ENCODE measurements at regions of chr4 and their contacts with region 1.

Region 1: GRCh38 chr4:41887821-41888686 is 47.2 kb upstream of the TMEM33 start:
- DNase-seq: peak in 3 of 4 experiments; percentile 39 to 60 (median 46)
- ATAC-seq: no peak
- H3K4me3 ChIP-seq: no peak overlapping the region
- H3K27ac ChIP-seq: no peak overlapping the region
- H3K4me1 ChIP-seq: no peaks in the 10 kb centered on the region
- H3K27me3 ChIP-seq: peaks cover 0 to 3% of the 10 kb centered on the region in 2 experiments; a peak in 3 of 5 replicates
- CTCF ChIP-seq: peak; percentile 59 to 80 (median 70); a peak in 5 of 6 replicates
- EP300 ChIP-seq: no peak
- POLR2A ChIP-seq: no peak
- RAD21 ChIP-seq: peak; percentile 64 to 65

Region 2: DNA sequence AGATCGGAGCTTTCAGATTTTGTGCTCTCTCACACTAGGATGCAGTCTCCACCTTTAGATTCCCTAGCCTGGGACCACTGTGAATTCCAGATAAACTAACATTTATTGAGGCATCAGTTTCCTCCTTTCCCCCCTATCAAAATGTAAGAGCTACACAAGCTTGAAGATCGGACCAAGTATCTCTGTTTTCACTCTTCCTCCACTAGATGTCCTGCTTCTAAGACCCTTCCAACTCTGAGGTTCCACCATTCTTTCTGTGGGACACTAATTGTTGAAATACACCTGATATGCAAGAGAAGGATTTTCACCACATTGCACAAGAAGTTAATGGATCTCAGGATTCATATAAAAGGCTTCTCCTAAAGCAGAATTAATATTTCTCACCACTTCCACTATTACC is 96.5 kb before region 1 on chr4:
- CTCF ChIA-PET with region 1: no interaction called
- POLR2A ChIA-PET with region 1: no interaction called
- in situ Hi-C with region 1: no loop called
- intact Hi-C with region 1: loop called (anchors 5 kb)
- DNase-seq: no peak
- ATAC-seq: no peak
- H3K4me3 ChIP-seq: no peak overlapping the region
- H3K27ac ChIP-seq: no peak overlapping the region
- H3K4me1 ChIP-seq: no peaks in the 10 kb centered on the region
- H3K27me3 ChIP-seq: no peaks in the 10 kb centered on the region
- CTCF ChIP-seq: no peak
- EP300 ChIP-seq: no peak
- POLR2A ChIP-seq: no peak
- RAD21 ChIP-seq: no peak

Region 3: DNA sequence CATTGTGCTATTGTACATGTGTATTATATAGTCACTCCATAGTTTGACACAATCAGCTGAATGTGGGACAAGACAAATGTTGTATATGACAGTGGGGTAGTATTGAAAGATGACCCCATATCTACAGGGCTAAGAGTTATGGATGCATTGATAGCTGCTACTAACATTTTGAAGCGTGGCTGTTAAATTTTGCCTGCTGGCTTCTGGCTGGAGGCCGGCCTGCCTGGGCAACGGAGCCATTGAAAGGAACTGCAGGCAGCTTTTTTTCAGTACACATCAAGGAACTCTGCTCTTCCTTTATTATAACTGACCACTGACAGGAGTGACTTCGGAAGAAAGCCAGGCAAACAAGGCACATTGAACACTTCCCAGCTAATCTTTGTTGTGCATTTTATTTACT is 29.0 kb before region 1 on chr4:
- CTCF ChIA-PET with region 1: no interaction called
- POLR2A ChIA-PET with region 1: no interaction called
- in situ Hi-C with region 1: no loop called
- intact Hi-C with region 1: no loop called
- DNase-seq: no peak
- ATAC-seq: no peak
- H3K4me3 ChIP-seq: no peak overlapping the region
- H3K27ac ChIP-seq: no peak overlapping the region
- H3K4me1 ChIP-seq: no peaks in the 10 kb centered on the region
- H3K27me3 ChIP-seq: peaks cover 0 to 11% of the 10 kb centered on the region in 2 experiments; a peak in 4 of 5 replicates
- CTCF ChIP-seq: no peak
- EP300 ChIP-seq: no peak
- POLR2A ChIP-seq: no peak
- RAD21 ChIP-seq: no peak

Region 4: GRCh38 chr4:42488114-42488513 is 600.1 kb after region 1 on chr4:
- CTCF ChIA-PET with region 1: no interaction called
- POLR2A ChIA-PET with region 1: no interaction called
- in situ Hi-C with region 1: no loop called
- intact Hi-C with region 1: no loop called
- DNase-seq: no peak
- ATAC-seq: no peak
- H3K4me3 ChIP-seq: no peak overlapping the region
- H3K27ac ChIP-seq: no peak overlapping the region
- H3K4me1 ChIP-seq: no peaks in the 10 kb centered on the region
- H3K27me3 ChIP-seq: peaks cover 0 to 2% of the 10 kb centered on the region in 2 experiments; a peak in 1 of 5 replicates
- CTCF ChIP-seq: no peak
- EP300 ChIP-seq: no peak
- POLR2A ChIP-seq: no peak
- RAD21 ChIP-seq: no peak